A549 (cell line): ENCODE measurements at regions of chr12 and their contacts with region 1.

Region 1: DNA sequence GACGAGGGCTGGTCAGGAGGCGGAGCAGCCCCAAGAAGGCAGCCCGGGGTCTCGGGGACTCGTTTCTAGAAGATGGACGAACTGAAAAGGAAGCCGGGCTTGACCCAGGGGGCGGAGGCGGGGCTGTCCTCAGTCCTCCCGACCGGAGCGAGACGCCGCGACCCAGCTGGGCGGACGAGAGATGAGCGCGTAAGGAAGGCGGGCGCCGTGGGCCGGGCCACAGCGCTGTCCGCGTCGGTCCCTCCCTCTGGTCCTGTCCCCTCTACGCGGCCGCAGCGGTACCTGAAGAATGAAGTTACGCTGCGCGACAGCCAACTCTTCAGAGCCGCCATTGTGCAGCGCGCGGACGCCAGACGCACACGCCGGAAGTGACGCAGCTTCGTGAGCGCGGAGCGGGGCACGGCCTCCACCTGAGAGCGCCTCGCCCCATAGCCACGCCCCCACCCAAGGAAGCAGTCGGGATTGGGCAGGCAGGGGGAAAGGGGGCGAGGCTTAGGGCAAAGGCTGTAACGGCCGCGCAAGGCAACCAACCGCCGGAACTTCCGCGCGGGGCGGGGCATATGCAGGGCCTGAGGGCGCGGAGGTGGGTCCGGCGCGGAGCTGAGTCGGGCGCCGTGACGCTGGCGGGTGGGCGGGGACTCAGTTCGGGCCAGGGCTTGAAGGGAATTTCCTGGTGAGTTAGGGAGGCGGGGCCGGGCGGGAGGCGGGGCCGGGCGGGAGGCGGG is at the start of gene DIABLO:
- DNase-seq: peak; percentile 92 to 100
- ATAC-seq: peak; percentile 88 to 93
- H3K4me3 ChIP-seq: peak within 1 kb of the TSS; percentile 63
- H3K27ac ChIP-seq: peak within 1 kb of the TSS; percentile 91 to 95
- H3K4me1 ChIP-seq: peaks cover 15% of the 10 kb centered on the region
- CTCF ChIP-seq: no peak
- EP300 ChIP-seq: no peak
- POLR2A ChIP-seq: peak; percentile 95
- RAD21 ChIP-seq: no peak
- polyA plus RNA-seq, gene DIABLO: 104 and 108 TPM in 2 replicates

Region 2: GRCh38 chr12:122111089-122111641 is 114.7 kb before region 1 on chr12:
- CTCF ChIA-PET with region 1: no interaction called
- POLR2A ChIA-PET with region 1: no interaction called
- DNase-seq: no peak
- ATAC-seq: peak; percentile 46 to 61; a peak in 3 of 6 replicates
- H3K4me3 ChIP-seq: no peak overlapping the region
- H3K27ac ChIP-seq: peak overlapping the region; percentile 31 to 71; a peak in 5 of 6 replicates
- H3K4me1 ChIP-seq: peaks cover 68% of the 10 kb centered on the region
- CTCF ChIP-seq: no peak
- EP300 ChIP-seq: no peak
- POLR2A ChIP-seq: no peak
- RAD21 ChIP-seq: no peak

Region 3: GRCh38 chr12:122204167-122205062 is 21.4 kb before region 1 on chr12:
- CTCF ChIA-PET with region 1: interaction called, 3 read pairs
- POLR2A ChIA-PET with region 1: interaction called, 13 read pairs
- DNase-seq: no peak
- ATAC-seq: peak in 1 of 2 experiments; percentile 3; a peak in 1 of 6 replicates
- H3K4me3 ChIP-seq: peak overlapping the region; percentile 59
- H3K27ac ChIP-seq: peak overlapping the region in 1 of 2 experiments; percentile 93; a peak in 4 of 6 replicates
- H3K4me1 ChIP-seq: no peaks in the 10 kb centered on the region
- CTCF ChIP-seq: no peak
- EP300 ChIP-seq: no peak
- POLR2A ChIP-seq: no peak
- RAD21 ChIP-seq: no peak

Region 4: DNA sequence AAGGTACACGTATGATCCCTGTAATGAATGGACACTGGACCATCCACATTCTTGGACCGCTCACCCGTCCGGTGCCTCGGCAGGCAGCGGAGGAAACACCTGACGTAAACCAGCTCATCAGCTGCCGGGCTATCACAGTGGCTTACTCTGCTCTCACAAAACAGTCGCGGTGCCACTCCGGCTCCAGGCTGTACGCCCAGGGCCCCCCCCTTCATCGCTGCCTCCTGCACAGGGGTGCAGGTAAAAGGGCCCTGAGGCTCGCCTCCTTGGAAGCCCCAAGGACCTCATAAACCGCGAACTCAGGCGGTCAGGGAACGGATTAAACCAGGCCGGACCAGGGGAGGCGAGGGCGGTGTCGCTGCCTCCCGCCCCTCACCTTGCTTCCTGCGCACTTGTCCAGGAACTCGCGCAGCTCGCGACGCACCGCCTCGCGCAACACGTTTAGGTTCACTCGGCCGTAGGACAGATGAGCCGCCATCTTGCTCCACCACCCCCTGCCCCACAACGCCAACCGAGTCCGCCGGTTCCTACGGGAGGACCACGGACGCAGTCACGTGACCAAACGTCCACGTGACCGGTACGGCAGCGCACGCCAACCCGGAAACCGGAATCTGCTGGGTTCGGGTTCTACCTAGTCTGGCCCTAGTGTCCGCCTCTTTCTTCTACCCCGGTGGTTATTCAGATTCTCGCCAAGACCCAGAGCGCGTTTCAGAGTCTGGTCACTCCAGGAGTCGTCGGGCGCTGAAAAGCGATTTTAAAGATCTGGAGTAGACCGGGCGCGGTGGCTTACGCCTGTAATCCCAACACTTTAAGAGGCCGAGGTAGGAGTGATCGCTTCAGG is 40.3 kb after region 1 on chr12 and contains the start of gene VPS33A:
- CTCF ChIA-PET with region 1: no interaction called
- POLR2A ChIA-PET with region 1: interaction called, 12 read pairs
- DNase-seq: peak; percentile 98 to 99
- ATAC-seq: peak; percentile 93 to 94
- H3K4me3 ChIP-seq: peak within 1 kb of the TSS; percentile 98
- H3K27ac ChIP-seq: peak within 1 kb of the TSS; percentile 94 to 95
- H3K4me1 ChIP-seq: peaks cover 10% of the 10 kb centered on the region; the same call in 1 of the 3 replicates
- CTCF ChIP-seq: no peak
- EP300 ChIP-seq: no peak
- POLR2A ChIP-seq: peak; percentile 96
- RAD21 ChIP-seq: no peak
- polyA plus RNA-seq, gene VPS33A: 28.6 and 32.4 TPM in 2 replicates